ENCODE measurements at regions of chr7 and their contacts with region 1.

Region 1: GRCh38 chr7:76011442-76011861 is 17.1 kb upstream of the TMEM120A start:
- DNase-seq: peak; percentile 64 to 85 (median 81)
- ATAC-seq: peak; percentile 90 to 96 (median 94)
- H3K4me3 ChIP-seq: peak overlapping the region in 2 of 12 donors; percentile 10 to 11
- H3K27ac ChIP-seq: peak overlapping the region; percentile 3 to 79 (median 70)
- H3K4me1 ChIP-seq: peaks cover 0 to 38% (median 21%) of the 10 kb centered on the region in 12 donors
- H3K27me3 ChIP-seq: no peaks in the 10 kb centered on the region
- CTCF ChIP-seq: no peak
- POLR2A ChIP-seq: no peak

Region 2: DNA sequence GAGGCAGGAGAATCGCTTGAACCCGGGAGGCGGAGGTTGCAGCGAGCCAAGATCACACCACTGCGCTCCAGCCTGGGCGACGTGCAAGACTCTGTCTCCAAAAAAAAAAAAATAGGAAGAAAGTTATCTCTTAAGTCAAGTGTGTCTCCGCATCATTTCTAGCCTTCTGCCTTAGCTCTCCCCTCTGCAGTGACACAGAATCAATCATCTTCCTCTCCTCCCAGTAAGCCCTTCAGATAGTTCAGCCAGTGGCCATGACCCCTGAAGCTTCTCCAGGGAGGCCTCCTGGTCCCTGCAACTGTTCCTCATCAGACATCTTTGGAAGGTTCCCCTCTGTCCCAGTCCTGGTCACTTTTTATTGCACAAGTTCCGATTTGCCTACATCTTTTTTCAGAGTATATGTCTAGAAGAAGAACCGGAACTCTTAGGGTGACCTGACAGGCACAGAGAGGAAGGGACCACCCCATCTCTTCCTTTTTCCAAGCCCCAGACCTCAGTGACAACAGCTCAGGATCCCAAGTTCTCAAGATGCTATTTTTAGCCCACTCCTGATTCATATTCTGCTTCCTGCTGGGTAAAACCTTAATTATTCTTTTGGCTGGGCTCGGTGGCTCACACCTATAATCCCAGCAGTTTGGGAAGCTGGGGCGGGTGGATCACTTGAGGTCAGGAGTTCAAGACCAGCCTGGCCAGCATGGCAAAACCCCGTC is 139.2 kb before region 1 on chr7:
- intact Hi-C with region 1: loop called in 1 of 10 experiments (anchors 2 kb)
- DNase-seq: peak in 1 of 5 donors; percentile 55
- ATAC-seq: peak; percentile 37 to 78 (median 74)
- H3K4me3 ChIP-seq: no peak overlapping the region
- H3K27ac ChIP-seq: peak overlapping the region in 11 of 12 donors; percentile 35 to 71 (median 63)
- H3K4me1 ChIP-seq: peaks cover 0 to 37% (median 10%) of the 10 kb centered on the region in 12 donors
- H3K27me3 ChIP-seq: no peaks in the 10 kb centered on the region
- CTCF ChIP-seq: no peak
- POLR2A ChIP-seq: no peak

Region 3: DNA sequence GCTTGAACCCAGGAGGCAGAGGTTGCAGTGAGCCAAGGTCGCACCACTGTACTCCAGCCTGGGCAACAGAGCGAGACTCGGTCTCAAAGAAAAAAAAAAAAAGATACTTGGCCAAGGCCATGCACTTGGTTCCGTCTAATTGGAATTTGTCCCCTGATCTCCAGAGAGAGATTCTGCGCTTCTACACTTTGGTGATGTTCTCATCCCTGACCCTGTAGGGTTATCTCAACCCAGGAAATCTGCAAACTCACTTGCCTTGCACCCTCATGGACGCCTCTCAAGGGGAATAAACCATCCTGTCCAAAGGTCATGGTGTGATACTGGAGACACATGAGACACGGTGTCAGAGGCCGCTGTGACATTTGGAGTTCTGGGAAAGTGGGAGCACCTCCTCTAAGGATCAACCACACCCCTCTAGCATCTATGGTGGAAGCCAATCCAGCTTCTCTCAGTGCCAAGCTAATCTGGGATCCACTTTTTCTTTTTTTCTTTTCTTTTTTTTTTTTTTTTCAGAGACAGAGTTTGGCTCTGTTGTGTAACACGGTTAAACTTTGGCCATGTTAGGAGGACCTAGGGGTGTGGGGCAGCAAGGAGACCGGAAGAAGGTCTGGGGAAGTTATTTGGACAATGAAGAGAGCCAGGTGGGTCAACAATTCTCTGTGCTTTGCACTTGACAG is 104.3 kb before region 1 on chr7:
- intact Hi-C with region 1: no loop called
- DNase-seq: peak in 2 of 5 donors; percentile 44 to 60
- ATAC-seq: peak in 3 of 4 donors; percentile 43 to 54 (median 50)
- H3K4me3 ChIP-seq: no peak overlapping the region
- H3K27ac ChIP-seq: peak overlapping the region in 2 of 12 donors; percentile 20 to 46
- H3K4me1 ChIP-seq: peaks cover 0 to 9% (median 0%) of the 10 kb centered on the region in 12 donors
- H3K27me3 ChIP-seq: no peaks in the 10 kb centered on the region
- CTCF ChIP-seq: no peak
- POLR2A ChIP-seq: no peak

Region 4: DNA sequence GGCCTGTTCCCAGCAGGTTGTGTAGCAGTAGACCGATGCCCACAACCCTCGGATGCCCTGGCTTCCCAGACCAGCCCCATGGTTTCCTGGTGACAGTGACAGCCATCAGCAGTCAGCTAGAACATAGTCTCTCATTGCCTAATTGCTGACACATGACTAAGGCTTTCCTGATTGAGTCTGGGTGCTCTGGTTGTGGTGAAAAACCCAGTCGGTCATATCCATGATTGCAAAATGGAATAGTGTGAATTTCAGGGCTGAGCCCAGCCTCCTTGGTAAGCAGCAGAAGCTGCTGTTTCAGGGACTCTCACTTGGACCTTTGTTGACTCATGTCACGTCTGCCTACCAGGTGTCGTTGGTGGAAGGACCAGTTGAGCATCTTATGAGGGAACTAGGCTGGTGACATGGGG is 59.9 kb before region 1 on chr7:
- intact Hi-C with region 1: loop called in 1 of 10 experiments (anchors 10 kb)
- DNase-seq: peak in 3 of 5 donors; percentile 32 to 82 (median 57)
- ATAC-seq: peak; percentile 57 to 83 (median 81)
- H3K4me3 ChIP-seq: no peak overlapping the region
- H3K27ac ChIP-seq: peak overlapping the region in 11 of 12 donors; percentile 46 to 93 (median 75)
- H3K4me1 ChIP-seq: peaks cover 0 to 37% (median 19%) of the 10 kb centered on the region in 12 donors
- H3K27me3 ChIP-seq: no peaks in the 10 kb centered on the region
- CTCF ChIP-seq: no peak
- POLR2A ChIP-seq: no peak

Region 5: DNA sequence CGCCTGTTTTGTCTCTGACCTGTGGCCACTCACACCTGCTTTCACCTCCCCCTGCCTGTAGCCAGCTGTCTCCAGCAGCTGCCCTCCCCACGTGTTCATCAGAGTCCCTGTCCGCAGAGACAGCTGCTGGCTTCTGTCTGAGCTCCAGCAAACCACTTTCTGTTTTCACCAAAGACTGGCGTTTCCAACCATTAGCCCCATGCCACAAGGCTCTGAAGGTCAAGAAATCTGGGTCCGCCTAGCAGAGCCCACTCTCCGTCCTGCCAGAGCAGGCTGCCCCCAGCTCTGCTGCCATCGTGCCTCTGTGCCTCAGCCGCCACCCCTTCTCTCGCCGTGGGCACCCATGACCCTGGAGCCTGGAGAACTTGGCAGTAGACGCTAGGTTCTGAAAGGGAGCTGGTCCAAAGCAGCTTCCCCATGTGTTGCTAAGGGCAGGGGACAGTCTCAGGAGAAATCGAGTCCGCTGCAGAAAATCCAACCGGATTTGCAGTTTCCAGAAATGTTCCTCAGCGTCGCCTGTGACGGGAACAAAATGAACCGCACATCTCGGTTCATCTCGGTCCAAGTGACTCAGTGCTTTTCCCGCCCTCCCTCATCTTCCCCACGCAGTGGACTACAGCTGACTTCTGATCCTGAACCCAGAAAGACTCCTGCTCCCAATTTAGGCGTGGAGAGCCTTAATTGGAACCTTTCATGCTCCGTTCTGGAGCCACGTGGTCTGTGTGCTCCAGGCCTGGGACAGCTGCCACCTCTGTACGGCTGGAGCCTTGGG is 45.1 kb before region 1 on chr7:
- intact Hi-C with region 1: loop called in 1 of 10 experiments (anchors 5 kb)
- DNase-seq: peak in 4 of 5 donors; percentile 66 to 77 (median 74)
- ATAC-seq: peak; percentile 59 to 64 (median 61)
- H3K4me3 ChIP-seq: peak overlapping the region in 5 of 12 donors; percentile 7 to 20 (median 18)
- H3K27ac ChIP-seq: peak overlapping the region; percentile 74 to 93 (median 83)
- H3K4me1 ChIP-seq: peaks cover 14 to 83% (median 70%) of the 10 kb centered on the region in 12 donors
- H3K27me3 ChIP-seq: no peaks in the 10 kb centered on the region
- CTCF ChIP-seq: no peak
- POLR2A ChIP-seq: no peak